Gastrocnemius medialis (tissue), 4 donors: ENCODE measurements at regions of chr9 and their contacts with region 1.

Region 1: GRCh38 chr9:7103771-7104170 is 346.0 kb downstream of the KDM4C start:
- DNase-seq: peak; percentile 71 to 81
- ATAC-seq: peak; percentile 98
- H3K4me3 ChIP-seq: no peak overlapping the region
- H3K27ac ChIP-seq: peak overlapping the region; percentile 65 to 85 (median 80)
- H3K4me1 ChIP-seq: peaks cover 25% of the 10 kb centered on the region in 2 donors
- H3K27me3 ChIP-seq: no peaks in the 10 kb centered on the region
- CTCF ChIP-seq: no peak
- POLR2A ChIP-seq: peak in 1 of 2 donors; percentile 39

Region 2: DNA sequence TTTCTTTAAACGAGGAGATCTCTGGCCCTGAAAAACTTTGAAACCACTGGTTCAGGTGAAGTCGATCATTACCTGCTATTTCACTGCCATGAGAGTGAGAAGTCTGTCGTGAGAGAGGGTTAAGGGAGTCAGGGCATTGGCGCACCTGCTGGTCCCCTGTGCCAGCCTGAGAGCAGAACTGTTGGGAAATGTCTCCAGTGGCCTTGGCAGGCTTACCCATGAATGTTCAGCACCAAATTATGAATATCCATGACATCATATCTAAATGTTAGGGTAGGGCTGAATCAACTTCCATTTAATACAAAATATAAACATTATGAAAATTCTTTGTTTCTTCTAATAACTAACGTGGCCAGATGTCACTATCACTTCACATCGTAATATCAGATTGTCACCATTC is 33.3 kb after region 1 on chr9:
- in situ Hi-C with region 1: no loop called
- intact Hi-C with region 1: loop called (anchors 1 kb)
- DNase-seq: peak; percentile 80 to 90
- ATAC-seq: peak; percentile 99 to 100
- H3K4me3 ChIP-seq: no peak overlapping the region
- H3K27ac ChIP-seq: peak overlapping the region; percentile 51 to 71 (median 60)
- H3K4me1 ChIP-seq: peaks cover 30 to 32% of the 10 kb centered on the region in 2 donors
- H3K27me3 ChIP-seq: no peaks in the 10 kb centered on the region
- CTCF ChIP-seq: no peak
- POLR2A ChIP-seq: no peak

Region 3: GRCh38 chr9:7147121-7148090 is 43.6 kb after region 1 on chr9:
- in situ Hi-C with region 1: no loop called
- intact Hi-C with region 1: loop called (anchors 1 kb)
- DNase-seq: peak; percentile 82 to 90
- ATAC-seq: peak; percentile 90 to 91
- H3K4me3 ChIP-seq: no peak overlapping the region
- H3K27ac ChIP-seq: peak overlapping the region; percentile 83 to 95 (median 90)
- H3K4me1 ChIP-seq: peaks cover 56 to 68% of the 10 kb centered on the region in 2 donors
- H3K27me3 ChIP-seq: no peaks in the 10 kb centered on the region
- CTCF ChIP-seq: peak in 2 of 5 experiments; percentile 28 to 40
- POLR2A ChIP-seq: no peak